ENCODE measurements at regions of chr12 and their contacts with region 1.

Region 1: DNA sequence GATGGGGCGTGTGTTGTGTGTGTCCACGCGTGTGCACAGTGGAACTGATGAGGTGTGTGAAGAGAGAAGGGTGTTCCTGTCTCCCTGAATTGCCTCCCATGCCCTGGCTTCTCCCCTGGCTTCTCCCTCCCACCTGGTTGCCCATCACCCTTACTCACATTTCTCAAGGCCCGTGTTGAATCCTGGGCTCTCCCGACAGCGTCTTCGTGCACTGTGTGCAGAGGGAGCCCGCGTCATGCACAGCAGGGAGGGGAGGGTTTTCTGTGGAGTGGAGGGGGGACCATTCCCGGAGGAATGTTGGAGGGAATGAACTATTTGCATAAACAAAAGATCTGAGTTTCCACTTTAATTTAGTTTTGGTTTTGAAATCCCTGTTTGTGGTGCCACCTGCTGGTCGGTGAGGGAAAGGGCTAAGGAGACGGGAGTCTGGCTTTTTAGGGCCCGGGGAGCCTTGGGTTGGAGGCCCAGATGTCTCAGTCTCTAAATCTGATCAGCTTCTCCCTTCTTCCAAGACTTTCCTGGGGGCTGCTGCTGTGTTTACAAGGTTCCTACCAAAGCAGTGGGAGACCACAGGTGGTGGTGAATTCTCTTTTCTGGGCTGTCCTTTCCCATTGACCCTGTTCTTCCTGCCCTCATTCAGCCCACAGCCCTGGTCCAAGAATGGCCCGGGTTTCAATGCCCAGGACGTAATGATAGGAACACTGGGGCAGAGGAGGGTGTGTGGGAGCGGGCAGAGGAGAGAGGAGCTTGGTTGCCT is at the start of gene C1R:
- DNase-seq: peak; percentile 88
- H3K4me3 Mint-ChIP-seq: peak within 1 kb of the TSS; percentile 79
- H3K27ac Mint-ChIP-seq: peak within 1 kb of the TSS; percentile 93
- H3K4me1 Mint-ChIP-seq: peaks cover 26% of the 10 kb centered on the region
- H3K27me3 Mint-ChIP-seq: no peaks in the 10 kb centered on the region
- CTCF ChIP-seq: peak; percentile 75
- total RNA-seq, gene C1R: 13.1 and 16.7 TPM in 2 replicates

Region 2: DNA sequence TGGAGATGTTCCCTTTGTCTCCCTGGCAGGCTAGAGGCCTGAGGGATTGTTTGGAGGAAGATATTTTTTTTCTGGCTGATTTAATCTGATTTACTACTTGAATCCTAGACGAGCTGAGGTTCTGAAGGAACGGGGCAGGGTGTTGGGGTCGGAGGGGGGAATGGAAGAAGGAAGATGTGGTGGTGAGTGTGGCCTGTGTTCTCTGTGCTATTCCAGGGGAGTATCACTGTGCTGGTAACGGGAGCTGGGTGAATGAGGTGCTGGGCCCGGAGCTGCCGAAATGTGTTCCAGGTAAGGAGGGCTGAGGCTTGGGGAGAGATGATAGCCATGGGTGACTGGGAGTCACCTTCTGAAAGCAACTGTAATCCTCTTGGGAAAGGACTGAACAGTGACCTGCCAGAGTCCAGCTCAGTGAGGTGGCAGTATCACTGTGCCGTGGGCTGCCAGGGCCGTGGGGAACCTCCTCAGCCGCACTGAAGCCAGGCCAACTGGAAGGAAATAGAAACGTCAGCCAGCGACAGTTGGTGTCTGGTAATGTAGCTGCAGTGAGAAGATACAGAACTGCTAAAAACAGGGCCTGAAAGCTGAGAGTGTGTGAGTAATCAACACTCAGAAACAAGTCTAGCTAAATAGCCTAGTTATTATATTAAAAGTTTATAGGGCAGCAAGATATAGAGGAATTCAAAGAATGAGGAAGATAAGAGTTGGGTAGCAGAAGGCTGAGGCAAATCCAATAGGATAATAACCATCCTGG is 24.0 kb before region 1 on chr12:
- CTCF ChIA-PET with region 1: interaction called, 16 read pairs
- POLR2A ChIA-PET with region 1: interaction called, 5 read pairs
- intact Hi-C with region 1: no loop called
- DNase-seq: no peak
- H3K4me3 Mint-ChIP-seq: no peak overlapping the region
- H3K27ac Mint-ChIP-seq: no peak overlapping the region
- H3K4me1 Mint-ChIP-seq: peaks cover 9% of the 10 kb centered on the region
- H3K27me3 Mint-ChIP-seq: no peaks in the 10 kb centered on the region
- CTCF ChIP-seq: no peak

Region 3: DNA sequence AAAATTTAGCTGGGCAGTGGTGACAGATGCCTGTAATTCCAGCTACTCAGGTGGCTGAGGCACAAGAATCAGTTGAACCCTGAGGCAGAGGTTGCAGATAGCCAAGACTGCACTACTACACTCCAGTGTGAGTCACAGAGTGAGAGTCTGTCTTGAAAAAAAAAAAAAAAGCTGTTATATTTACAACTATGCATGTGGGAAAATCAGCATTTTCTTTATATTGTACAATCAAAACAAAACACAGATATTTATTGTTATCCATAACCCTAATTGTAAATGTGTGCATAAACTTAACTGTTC is 12.6 kb before region 1 on chr12:
- CTCF ChIA-PET with region 1: interaction called, 9 read pairs
- POLR2A ChIA-PET with region 1: interaction called, 18 read pairs
- intact Hi-C with region 1: no loop called
- DNase-seq: peak; percentile 89
- H3K4me3 Mint-ChIP-seq: peak overlapping the region; percentile 46
- H3K27ac Mint-ChIP-seq: peak overlapping the region; percentile 73
- H3K4me1 Mint-ChIP-seq: peaks cover 26% of the 10 kb centered on the region
- H3K27me3 Mint-ChIP-seq: no peaks in the 10 kb centered on the region
- CTCF ChIP-seq: no peak